ENCODE measurements at regions of chr9 and their contacts with region 1.

Region 1: GRCh38 chr9:93064392-93065134 is 6.1 kb downstream of the SUSD3 start:
- DNase-seq: peak; percentile 94
- ATAC-seq: peak; percentile 86
- H3K4me3 ChIP-seq: peak overlapping the region; percentile 65
- H3K27ac ChIP-seq: peak overlapping the region; percentile 88
- H3K4me1 ChIP-seq: peaks cover 54% of the 10 kb centered on the region
- H3K27me3 ChIP-seq: no peaks in the 10 kb centered on the region
- CTCF ChIP-seq: no peak
- EP300 ChIP-seq: peak; percentile 87 to 88
- POLR2A ChIP-seq: peak; percentile 84
- RAD21 ChIP-seq: no peak; the same call in 1 of the 2 replicates

Region 2: GRCh38 chr9:92963831-92964626 is 100.5 kb before region 1 on chr9:
- CTCF ChIA-PET with region 1: interaction called, 9 read pairs
- POLR2A ChIA-PET with region 1: interaction called, 5 read pairs
- RAD21 ChIA-PET with region 1: interaction called, 6 read pairs
- SMC1A ChIA-PET with region 1: interaction called, 10 read pairs
- in situ Hi-C with region 1: no loop called
- intact Hi-C with region 1: loop called (anchors 2 kb)
- DNase-seq: peak; percentile 80
- ATAC-seq: peak; percentile 80
- H3K4me3 ChIP-seq: peak overlapping the region; percentile 72
- H3K27ac ChIP-seq: peak overlapping the region; percentile 97
- H3K4me1 ChIP-seq: peaks cover 32% of the 10 kb centered on the region
- H3K27me3 ChIP-seq: no peaks in the 10 kb centered on the region
- CTCF ChIP-seq: no peak
- EP300 ChIP-seq: peak in 1 of 2 experiments; percentile 18; a peak in 1 of 4 replicates
- POLR2A ChIP-seq: peak; percentile 83
- RAD21 ChIP-seq: no peak

Region 3: GRCh38 chr9:93028448-93029006 is 36.0 kb before region 1 on chr9:
- CTCF ChIA-PET with region 1: interaction called, 4 read pairs
- POLR2A ChIA-PET with region 1: interaction called, 17 read pairs
- RAD21 ChIA-PET with region 1: interaction called, 8 read pairs
- SMC1A ChIA-PET with region 1: interaction called, 15 read pairs
- in situ Hi-C with region 1: no loop called
- intact Hi-C with region 1: loop called (anchors 2 kb)
- DNase-seq: peak; percentile 59
- ATAC-seq: peak; percentile 86
- H3K4me3 ChIP-seq: no peak overlapping the region
- H3K27ac ChIP-seq: peak overlapping the region; percentile 58
- H3K4me1 ChIP-seq: peaks cover 16% of the 10 kb centered on the region
- H3K27me3 ChIP-seq: no peaks in the 10 kb centered on the region
- CTCF ChIP-seq: no peak
- EP300 ChIP-seq: no peak
- POLR2A ChIP-seq: no peak
- RAD21 ChIP-seq: no peak

Region 4: GRCh38 chr9:93095205-93096130 is 30.9 kb after region 1 on chr9:
- CTCF ChIA-PET with region 1: interaction called, 9 read pairs
- POLR2A ChIA-PET with region 1: interaction called, 36 read pairs
- RAD21 ChIA-PET with region 1: interaction called, 13 read pairs
- SMC1A ChIA-PET with region 1: interaction called, 14 read pairs
- in situ Hi-C with region 1: no loop called
- intact Hi-C with region 1: loop called (anchors 1 kb)
- DNase-seq: peak; percentile 85
- ATAC-seq: peak; percentile 81
- H3K4me3 ChIP-seq: peak overlapping the region; percentile 54
- H3K27ac ChIP-seq: peak overlapping the region; percentile 99
- H3K4me1 ChIP-seq: peaks cover 61% of the 10 kb centered on the region
- H3K27me3 ChIP-seq: no peaks in the 10 kb centered on the region
- CTCF ChIP-seq: no peak
- EP300 ChIP-seq: no peak
- POLR2A ChIP-seq: peak; percentile 78
- RAD21 ChIP-seq: no peak

Measured in GM12878 (cell line).